Activated CD4-positive, alpha-beta T cell treated with anti-CD3 and anti-CD28 coated beads for 36 hours (primary cell): ENCODE measurements at regions of chr11 and their contacts with region 1.

Region 1: DNA sequence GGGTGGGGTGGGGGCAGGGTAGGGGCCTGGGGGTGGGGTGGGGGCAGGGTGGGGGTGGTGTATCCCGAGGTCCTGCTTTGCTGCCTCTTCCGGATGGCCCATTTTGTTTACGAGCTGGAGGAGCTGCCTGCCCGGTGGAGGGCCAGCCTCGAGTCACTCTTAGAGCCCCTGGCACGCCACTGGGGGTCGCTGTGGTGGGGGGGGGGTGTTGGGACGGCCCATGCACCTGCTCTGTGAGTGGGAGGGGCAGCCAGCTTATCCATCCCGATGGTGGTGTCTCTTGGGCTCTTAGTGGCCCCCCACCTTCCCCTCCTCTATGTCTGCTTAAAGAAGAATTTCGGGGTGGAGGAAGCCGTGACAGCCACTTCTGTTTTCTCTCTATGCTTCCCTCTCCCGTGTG is 24.6 kb downstream of the MRGPRD start:
- DNase-seq: peak; percentile 52
- ATAC-seq: peak; percentile 51
- H3K4me3 Mint-ChIP-seq: no peak overlapping the region
- H3K27ac Mint-ChIP-seq: no peak overlapping the region
- H3K4me1 Mint-ChIP-seq: no peaks in the 10 kb centered on the region
- H3K27me3 Mint-ChIP-seq: peaks cover 1% of the 10 kb centered on the region

Region 2: DNA sequence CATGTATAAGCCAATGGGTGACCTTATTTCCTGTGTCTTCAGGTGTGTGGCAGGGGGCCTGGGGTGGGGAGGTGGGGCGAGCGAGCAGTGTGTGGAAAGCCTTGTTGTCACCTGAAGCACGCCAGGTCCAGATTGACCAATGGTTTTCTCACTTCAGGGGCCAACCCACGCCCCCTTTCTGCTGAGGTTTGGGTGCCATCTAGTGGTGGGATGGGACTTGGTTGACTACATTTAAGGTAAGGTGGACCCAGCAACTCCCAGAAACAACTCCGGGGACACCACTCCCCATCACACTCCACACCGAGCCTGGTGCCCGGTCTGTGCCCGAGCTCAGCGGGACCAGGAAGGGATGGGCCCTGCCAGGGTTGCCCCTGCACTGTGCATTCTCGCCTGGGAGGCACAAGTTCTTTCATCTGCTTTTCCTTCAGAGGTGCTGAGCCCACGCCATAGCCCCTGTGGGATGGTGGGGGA is 132.6 kb after region 1 on chr11:
- CTCF ChIA-PET with region 1: no interaction called
- POLR2A ChIA-PET with region 1: no interaction called
- intact Hi-C with region 1: loop called (anchors 5 kb)
- DNase-seq: peak; percentile 78
- ATAC-seq: peak; percentile 63
- H3K4me3 Mint-ChIP-seq: no peak overlapping the region
- H3K27ac Mint-ChIP-seq: no peak overlapping the region
- H3K4me1 Mint-ChIP-seq: no peaks in the 10 kb centered on the region
- H3K27me3 Mint-ChIP-seq: no peaks in the 10 kb centered on the region